ENCODE measurements at regions of chr2 and their contacts with region 1.

Region 1: DNA sequence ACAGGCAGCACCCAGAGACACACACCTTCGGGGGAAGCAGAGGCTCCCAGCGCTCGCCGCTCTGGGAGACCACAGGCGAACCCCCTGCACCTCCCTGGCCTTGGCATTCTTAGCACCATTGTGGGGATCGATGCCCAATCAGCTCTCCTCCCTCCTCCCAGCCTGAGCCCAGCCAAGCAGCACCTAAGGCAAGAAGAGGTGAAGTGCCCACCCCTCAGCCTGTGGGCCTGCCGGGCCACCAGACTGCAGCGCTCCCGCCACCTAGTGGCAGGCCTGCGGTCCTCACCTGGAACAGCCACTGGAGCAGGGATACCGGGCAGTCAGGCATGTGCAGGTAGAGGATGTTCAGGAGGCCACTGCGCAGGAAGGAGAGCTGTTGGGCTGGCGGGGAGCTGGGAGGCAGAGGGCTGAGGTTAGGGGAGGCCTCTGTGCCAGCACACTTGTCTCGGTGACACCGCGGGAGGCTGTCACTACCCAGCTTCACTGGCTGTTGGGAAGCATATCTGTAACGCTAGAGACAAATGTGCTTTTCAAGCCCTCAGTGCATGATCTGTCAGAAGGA is 35.2 kb downstream of the FAM178B start:
- DNase-seq: peak; percentile 94
- H3K4me3 Mint-ChIP-seq: no peak overlapping the region
- H3K27ac Mint-ChIP-seq: peak overlapping the region; percentile 13
- H3K4me1 Mint-ChIP-seq: peaks cover 26% of the 10 kb centered on the region
- H3K27me3 Mint-ChIP-seq: no peaks in the 10 kb centered on the region

Region 2: DNA sequence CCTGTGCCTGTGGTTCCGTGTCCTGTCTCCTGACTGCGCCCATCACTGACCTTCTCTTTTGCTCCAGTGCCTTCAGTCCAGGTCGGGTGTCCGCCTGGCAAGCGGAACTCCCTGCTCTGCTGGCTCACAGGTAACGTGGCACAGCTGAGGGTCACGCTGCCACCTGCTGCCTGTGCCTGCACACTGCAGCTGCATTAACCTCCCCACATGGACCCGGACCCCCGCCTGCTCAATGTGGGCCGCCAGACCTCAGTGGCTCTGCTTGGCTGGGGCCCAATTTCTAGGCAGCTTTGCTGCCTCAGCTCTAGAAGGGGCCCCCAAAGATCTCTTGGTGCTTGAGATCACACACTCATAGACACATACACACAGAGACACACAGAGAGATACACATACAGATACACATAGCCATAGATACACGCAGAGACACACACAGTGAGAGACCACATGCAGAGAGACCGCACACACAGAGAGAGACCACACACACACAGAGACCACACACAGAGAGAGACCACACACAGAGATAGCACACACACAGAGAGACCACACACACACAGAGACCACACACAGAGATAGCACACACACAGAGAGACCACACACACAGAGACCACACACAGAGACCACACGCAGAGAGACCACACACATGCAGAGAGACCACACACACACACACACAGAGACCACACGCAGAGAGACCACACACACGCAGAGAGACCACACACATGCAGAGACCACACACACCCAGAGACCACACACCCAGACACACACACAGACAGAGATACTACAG is 150.0 kb before region 1 on chr2:
- intact Hi-C with region 1: no loop called
- DNase-seq: peak; percentile 91
- H3K4me3 Mint-ChIP-seq: no peak overlapping the region
- H3K27ac Mint-ChIP-seq: no peak overlapping the region
- H3K4me1 Mint-ChIP-seq: peaks cover 1% of the 10 kb centered on the region
- H3K27me3 Mint-ChIP-seq: no peaks in the 10 kb centered on the region

Region 3: DNA sequence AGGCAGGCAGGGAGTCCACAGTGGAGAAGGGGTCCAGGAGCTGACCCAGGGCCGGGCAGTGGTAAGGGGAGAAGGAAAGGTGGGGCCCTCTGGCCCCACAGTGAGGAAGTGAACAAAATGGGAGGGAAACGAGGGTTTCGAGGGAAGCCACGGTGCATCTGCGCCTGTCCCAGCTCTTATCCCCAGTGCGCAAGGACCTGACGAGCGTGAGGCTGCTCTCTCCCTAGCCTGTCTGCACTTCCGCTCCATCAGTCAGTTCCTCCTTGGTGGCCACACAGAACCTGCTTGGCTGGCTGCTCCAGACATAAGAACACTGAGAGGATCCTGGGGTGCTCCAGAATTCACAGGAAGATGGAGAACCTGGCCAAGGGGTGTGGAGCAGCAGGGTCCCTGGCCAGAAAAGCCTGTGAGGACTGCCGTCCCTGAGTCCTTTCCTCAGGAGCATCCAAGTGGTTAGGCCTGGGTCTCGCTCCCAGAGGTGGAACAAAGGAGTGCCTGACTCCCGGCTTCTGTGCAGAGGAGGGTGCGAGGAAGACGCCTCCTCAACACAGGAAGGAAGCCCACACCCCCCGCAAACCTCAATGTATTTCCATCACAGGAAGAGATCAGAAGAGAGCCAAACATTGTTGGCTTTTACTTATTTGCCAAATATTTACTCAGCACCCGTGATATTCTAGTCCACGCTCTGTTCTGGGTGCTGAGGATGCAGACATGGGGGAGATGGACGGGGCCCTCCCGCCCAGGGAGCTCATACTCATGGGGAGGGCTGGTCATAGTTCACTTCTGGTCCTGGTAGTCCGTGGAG is 37.6 kb before region 1 on chr2:
- intact Hi-C with region 1: loop called (anchors 5 kb)
- DNase-seq: peak; percentile 90
- H3K4me3 Mint-ChIP-seq: peak overlapping the region; percentile 82
- H3K27ac Mint-ChIP-seq: peak overlapping the region; percentile 88
- H3K4me1 Mint-ChIP-seq: peaks cover 34% of the 10 kb centered on the region
- H3K27me3 Mint-ChIP-seq: no peaks in the 10 kb centered on the region

Region 4: GRCh38 chr2:96930351-96931015 is 20.7 kb before region 1 on chr2:
- intact Hi-C with region 1: loop called (anchors 1 kb)
- DNase-seq: no peak
- H3K4me3 Mint-ChIP-seq: no peak overlapping the region
- H3K27ac Mint-ChIP-seq: no peak overlapping the region
- H3K4me1 Mint-ChIP-seq: peaks cover 1% of the 10 kb centered on the region
- H3K27me3 Mint-ChIP-seq: peaks cover 16% of the 10 kb centered on the region

Measured in activated CD4-positive, alpha-beta T cell treated with anti-CD3 and anti-CD28 coated beads, Interleukin-2, amount 10 ng/mL, durations not matched to agents 24 days and 14 days (primary cell).